HEK293 (cell line): ENCODE measurements at regions of chr7 and their contacts with region 1.

Region 1: DNA sequence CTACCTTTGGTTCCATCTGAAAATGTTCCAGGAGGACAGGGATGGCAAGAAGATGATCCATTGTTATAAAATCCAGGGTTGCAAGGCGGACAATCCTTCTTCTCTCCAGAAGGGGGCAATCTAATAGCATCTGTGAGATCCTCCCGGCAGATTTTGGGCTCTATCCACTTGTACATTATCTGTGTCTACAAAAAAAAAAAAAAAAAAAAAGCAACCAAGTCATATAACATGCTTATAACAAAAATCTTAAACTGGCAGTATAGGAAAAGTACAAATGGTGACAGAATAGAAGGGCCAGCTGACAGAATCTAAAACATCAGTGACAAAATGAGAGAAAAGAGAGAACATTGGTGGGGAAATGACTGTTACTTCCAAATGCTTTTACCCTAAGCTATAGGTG is 132.7 kb downstream of the ELAPOR2 start:
- H3K4me3 ChIP-seq: no peak overlapping the region
- H3K27ac ChIP-seq: no peak overlapping the region
- H3K4me1 ChIP-seq: no peaks in the 10 kb centered on the region
- CTCF ChIP-seq: 0 out of 2 replicates have a peak, but pooled peaks have one; percentile 10

Region 2: DNA sequence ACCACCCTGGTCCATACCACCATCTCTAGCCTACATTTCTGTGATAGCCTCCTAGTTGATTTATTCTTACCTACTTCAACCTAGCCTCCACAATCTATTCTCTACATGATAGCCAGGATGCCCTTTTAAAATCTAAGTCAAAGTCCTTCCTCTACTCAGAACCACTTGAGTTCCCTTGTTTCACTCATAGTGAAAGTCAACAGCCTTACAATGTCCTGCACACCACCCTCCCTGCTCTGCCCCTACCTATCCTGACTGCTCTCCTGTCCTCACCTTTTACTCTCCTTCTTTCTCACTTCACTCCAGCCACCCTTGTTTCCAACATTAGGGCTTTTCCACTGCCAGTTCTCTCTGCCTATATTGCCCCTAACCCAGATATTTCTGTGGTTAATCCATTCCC is 136.3 kb before region 1 on chr7:
- CTCF ChIA-PET with region 1: no interaction called
- POLR2A ChIA-PET with region 1: no interaction called
- H3K4me3 ChIP-seq: no peak overlapping the region
- H3K27ac ChIP-seq: no peak overlapping the region
- H3K4me1 ChIP-seq: no peaks in the 10 kb centered on the region
- CTCF ChIP-seq: no peak

Region 3: DNA sequence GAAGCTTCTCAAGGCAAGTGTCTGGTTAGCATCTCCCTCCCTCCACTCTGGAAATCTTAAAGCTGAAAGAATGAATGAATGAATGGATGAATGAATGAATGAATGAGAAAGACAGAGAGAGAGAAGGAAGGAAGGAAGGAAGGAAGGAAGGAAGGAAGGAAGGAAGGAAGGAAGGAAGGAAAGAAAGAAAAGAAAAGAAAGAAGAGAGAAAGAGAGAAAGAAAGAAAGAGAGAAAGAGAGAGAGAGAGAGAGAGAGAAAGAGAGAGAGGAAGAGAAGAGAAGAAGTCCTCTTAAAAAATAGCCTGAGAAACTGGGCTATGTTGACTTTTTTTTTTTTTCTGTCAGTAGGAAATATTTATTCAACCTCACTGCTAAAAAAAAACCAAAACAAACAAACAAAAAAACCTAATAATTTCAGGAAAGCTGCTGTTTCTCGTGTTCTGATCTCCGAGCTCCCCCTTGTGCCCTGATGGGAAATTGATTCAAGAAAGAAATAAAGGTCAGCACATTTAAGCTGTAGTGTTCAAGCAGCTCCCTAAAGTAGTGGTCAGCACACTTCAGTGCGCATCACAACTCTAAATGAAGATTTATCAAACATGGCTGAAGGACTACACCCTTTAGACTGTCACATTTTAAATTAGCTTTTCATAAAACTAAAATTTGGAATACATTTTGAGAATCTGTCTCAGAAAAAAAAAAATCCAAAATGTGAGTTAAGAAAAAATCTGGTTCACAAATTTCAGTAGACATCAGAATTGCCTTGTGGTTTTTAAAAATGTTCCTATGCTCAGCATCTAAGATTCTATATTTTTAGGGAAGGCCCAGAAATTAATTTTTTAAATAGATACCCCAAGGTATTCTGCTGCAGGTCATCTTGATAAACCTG is 21.5 kb before region 1 on chr7:
- CTCF ChIA-PET with region 1: interaction called, 12 read pairs
- POLR2A ChIA-PET with region 1: no interaction called
- H3K4me3 ChIP-seq: no peak overlapping the region
- H3K27ac ChIP-seq: no peak overlapping the region
- H3K4me1 ChIP-seq: no peaks in the 10 kb centered on the region
- CTCF ChIP-seq: no peak

Region 4: DNA sequence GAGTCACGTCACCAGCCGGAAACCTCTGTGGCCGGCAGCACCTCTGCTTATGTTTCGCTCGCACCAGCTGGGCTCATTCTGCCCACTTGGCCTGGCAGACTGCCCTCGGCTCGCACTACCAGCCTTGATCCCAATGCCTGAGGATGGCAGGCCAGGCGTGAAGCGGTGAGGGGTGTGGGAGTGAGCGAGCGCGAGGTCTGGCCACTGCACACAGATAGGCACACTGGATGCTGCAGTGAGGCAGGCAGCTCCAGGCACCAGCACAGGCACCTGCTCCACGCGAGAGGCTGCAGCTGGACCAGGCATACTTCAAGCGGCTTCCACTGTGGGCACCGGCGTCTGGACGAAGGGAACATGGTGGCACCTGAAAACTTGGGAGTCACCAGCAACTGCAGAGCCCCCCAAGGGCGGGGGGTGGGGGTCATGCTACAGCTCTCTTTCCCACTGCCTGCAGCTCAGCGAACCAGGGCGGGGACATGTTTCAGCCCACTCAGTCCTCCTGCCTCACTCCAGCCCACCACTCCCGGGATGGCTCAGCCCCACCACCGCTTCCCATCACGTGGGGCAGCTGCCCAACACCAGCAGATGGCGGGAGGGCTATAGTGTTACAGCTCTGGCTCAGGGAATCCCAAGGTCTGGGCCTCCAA is 220.1 kb after region 1 on chr7:
- CTCF ChIA-PET with region 1: interaction called, 25 read pairs
- POLR2A ChIA-PET with region 1: interaction called, 3 read pairs
- H3K4me3 ChIP-seq: no peak overlapping the region
- H3K27ac ChIP-seq: no peak overlapping the region
- H3K4me1 ChIP-seq: no peaks in the 10 kb centered on the region
- CTCF ChIP-seq: no peak